Transverse colon (tissue), 4 donors: ENCODE measurements at regions of chr2 and their contacts with region 1.

Region 1: GRCh38 chr2:85813982-85814801 is 60.4 kb downstream of the ATOH8 start:
- DNase-seq: peak; percentile 92
- H3K4me3 ChIP-seq: no peak overlapping the region
- H3K27ac ChIP-seq: no peak overlapping the region
- H3K4me1 ChIP-seq: peaks cover 0 to 17% (median 13%) of the 10 kb centered on the region in 4 donors
- H3K27me3 ChIP-seq: no peaks in the 10 kb centered on the region
- CTCF ChIP-seq: peak; percentile 92 to 94 (median 93)
- EP300 ChIP-seq: no peak
- POLR2A ChIP-seq: no peak

Region 2: DNA sequence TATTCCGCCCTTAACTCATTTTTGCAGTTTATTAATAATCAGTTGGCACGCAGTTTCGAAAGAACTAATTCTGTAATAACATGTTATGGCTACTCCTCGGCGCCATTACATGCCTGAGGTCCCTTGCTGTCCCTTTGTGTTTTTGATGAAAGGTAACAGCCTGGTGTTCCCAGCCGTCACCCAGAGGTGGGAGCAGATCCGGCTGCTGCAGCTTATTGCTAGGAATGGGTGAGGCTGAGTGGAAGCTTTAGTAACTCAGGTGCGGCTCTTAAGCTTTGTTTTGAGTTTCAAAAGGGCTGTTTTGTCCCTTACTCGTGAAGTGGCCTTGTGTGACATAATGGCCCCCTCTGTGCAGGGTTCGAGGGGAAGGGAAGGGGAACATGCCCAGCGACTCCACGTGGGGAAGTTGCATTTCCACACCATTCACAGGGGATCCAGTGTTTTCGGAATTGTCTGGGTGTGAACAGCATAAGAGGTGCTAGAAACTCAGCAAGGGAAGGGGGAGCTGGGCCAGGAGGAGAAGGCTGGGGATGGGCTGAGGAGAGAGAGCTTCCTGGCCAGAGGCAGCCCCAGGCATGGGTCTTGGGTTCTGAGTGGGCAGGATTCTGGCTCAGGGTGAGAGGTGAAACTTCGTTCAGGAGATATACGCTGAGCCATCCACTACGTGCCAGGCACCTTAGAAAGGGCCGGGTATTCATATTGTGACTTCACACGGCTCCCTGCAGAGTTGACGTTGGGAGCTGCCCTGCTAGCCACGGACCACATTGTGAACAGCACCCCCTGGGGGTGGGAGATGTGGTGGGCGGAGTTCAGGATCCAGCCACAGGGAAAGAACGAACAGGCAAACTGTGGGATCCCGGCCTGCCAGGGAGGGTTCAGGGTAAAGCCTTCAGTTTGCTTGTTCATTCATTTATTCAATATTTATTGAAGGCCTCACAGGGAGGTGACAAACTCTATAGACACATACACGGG is 570.8 kb before region 1 on chr2:
- in situ Hi-C with region 1: no loop called
- intact Hi-C with region 1: no loop called
- DNase-seq: peak; percentile 39
- H3K4me3 ChIP-seq: no peak overlapping the region
- H3K27ac ChIP-seq: no peak overlapping the region
- H3K4me1 ChIP-seq: peaks cover 5 to 9% (median 6%) of the 10 kb centered on the region in 4 donors
- H3K27me3 ChIP-seq: no peaks in the 10 kb centered on the region
- CTCF ChIP-seq: peak; percentile 33 to 49 (median 43)
- EP300 ChIP-seq: no peak
- POLR2A ChIP-seq: no peak

Region 3: DNA sequence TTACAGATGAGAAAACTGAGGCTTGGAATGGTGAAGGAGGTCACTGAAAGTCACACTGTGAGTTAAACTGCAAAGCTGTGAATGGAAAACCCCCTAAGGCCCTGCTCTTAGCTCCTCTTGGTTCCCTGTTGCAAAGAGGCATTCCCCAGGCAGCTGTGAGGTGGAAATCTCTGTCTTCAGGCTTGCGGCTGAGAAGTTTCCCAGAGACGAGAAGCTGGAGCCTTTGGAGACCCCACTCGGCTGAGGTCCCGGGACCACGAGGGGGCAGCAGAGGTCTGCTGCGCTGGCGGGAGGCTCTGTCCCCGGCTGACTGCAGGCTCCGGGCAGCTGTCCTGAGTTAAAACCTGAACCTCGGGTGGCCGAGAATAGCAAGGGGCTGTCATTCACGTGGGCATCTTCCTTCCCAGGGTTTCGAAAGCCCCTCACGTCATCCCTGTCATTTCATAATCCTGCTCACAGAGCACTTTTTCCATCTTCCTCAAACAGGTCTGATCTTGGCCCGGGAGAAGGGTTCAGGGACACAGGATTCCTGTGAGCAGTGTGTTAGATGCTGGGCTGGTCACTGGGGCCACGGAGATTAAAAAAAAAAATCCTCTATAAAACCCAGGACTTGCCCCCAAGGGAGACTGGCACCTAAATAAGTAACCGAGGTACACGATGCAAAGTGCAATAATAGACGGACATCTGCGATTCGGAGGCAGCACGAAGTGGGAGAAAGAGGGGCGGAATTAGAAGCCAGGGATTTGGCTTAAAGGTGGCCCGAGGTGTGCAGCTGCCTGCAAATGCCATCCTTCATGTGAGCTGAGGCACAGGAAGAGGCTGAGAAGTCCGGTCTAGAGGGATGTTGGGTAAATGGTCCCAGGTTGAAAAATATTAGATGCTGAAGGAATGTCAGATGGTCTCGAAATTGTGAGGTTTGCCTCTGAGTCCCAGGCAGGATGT is 85.0 kb before region 1 on chr2:
- in situ Hi-C with region 1: loop called in 1 of 4 experiments (anchors 5 kb)
- intact Hi-C with region 1: loop called (anchors 2 kb)
- DNase-seq: peak; percentile 89
- H3K4me3 ChIP-seq: no peak overlapping the region
- H3K27ac ChIP-seq: no peak overlapping the region
- H3K4me1 ChIP-seq: peaks cover 0 to 11% (median 4%) of the 10 kb centered on the region in 4 donors
- H3K27me3 ChIP-seq: peaks cover 4% of the 10 kb centered on the region
- CTCF ChIP-seq: peak; percentile 88 to 94 (median 90)
- EP300 ChIP-seq: no peak
- POLR2A ChIP-seq: no peak

Region 4: DNA sequence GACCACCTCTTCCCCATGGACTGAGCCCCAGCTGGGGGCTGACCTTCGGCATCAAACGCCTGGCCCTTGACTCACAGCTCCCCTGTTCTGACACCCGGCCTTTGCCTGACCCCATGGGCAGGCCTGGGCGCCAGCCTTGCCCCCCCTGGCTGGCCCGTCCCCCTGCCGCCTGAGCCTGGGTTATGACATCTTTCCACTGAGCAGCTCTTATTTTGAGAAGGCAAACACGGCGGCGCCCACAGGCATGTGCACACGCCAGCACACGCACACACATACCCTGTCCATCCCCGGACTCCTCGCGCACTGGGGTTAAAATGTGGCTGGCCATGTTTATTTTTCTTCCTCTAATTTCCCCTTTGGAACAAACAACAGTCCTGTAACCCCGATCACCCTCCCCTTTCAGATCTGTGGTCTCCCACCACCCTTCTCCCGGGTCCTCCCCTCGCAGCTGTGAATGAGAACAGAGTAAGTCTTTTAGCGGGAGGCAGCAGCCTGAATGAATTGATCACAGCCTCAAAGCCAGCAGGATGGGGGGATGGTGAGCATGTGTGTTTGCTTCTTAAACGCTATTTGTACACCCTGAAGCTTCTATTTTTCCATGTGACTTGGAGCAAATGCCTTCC is 72.2 kb before region 1 on chr2:
- in situ Hi-C with region 1: loop called in 3 of 4 experiments (anchors 5 kb)
- intact Hi-C with region 1: no loop called
- DNase-seq: peak; percentile 51
- H3K4me3 ChIP-seq: no peak overlapping the region
- H3K27ac ChIP-seq: peak overlapping the region; percentile 80 to 88 (median 84)
- H3K4me1 ChIP-seq: peaks cover 26 to 56% (median 42%) of the 10 kb centered on the region in 4 donors
- H3K27me3 ChIP-seq: no peaks in the 10 kb centered on the region
- CTCF ChIP-seq: no peak
- EP300 ChIP-seq: no peak
- POLR2A ChIP-seq: no peak